GM12878 (cell line): ENCODE measurements at regions of chr20 and their contacts with region 1.

Region 1: GRCh38 chr20:54980103-54980960 is 504.9 kb downstream of the DOK5 start:
- DNase-seq: no peak
- ATAC-seq: peak; percentile 75
- H3K4me3 ChIP-seq: no peak overlapping the region
- H3K27ac ChIP-seq: no peak overlapping the region
- H3K4me1 ChIP-seq: no peaks in the 10 kb centered on the region
- H3K27me3 ChIP-seq: no peaks in the 10 kb centered on the region
- CTCF ChIP-seq: peak in 2 of 3 experiments; percentile 40 to 61; a peak in 3 of 6 replicates
- EP300 ChIP-seq: no peak
- POLR2A ChIP-seq: no peak
- RAD21 ChIP-seq: no peak

Region 2: GRCh38 chr20:54643791-54644190 is 336.5 kb before region 1 on chr20:
- CTCF ChIA-PET with region 1: no interaction called
- POLR2A ChIA-PET with region 1: no interaction called
- RAD21 ChIA-PET with region 1: no interaction called
- SMC1A ChIA-PET with region 1: no interaction called
- in situ Hi-C with region 1: no loop called
- intact Hi-C with region 1: no loop called
- DNase-seq: no peak
- ATAC-seq: no peak
- H3K4me3 ChIP-seq: no peak overlapping the region
- H3K27ac ChIP-seq: no peak overlapping the region
- H3K4me1 ChIP-seq: no peaks in the 10 kb centered on the region
- H3K27me3 ChIP-seq: no peaks in the 10 kb centered on the region
- CTCF ChIP-seq: no peak
- EP300 ChIP-seq: no peak
- POLR2A ChIP-seq: no peak
- RAD21 ChIP-seq: no peak

Region 3: DNA sequence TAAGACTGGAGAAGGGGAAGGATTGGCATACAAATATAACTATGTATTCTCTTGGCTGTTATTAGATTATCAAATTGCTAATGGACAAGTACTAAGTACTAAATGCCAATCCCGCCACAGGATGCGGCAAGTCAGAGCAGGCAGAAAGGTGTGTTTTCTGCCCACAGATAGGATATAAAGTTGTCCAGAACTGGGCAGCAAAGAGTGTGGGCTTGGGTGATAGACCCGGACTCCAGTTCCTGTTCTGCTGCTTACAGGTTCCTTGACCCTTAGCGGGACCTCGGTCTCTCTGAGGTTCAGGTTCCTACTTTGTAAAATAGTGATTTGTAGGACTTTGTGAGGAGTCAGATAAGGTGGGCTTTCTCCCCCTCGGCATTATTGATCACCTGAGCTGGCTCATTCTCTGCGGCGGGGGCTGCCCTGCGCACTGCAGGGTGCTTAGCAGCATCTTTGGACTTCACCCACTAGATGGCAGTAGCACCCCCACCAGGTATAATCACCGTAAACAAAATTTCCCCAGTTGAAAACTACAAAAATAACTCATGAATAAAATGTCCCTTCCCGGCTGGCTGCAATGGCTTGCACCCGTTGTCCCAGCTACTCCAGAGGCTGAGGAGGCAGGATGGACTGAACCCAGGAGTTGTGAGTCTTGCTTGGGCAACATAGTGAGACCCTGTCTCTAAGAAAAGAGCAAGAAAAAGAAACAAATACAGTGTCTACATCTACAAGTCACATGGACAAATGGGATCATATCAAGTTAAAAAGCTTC is 311.9 kb before region 1 on chr20:
- CTCF ChIA-PET with region 1: interaction called, 4 read pairs
- POLR2A ChIA-PET with region 1: no interaction called
- RAD21 ChIA-PET with region 1: no interaction called
- SMC1A ChIA-PET with region 1: no interaction called
- in situ Hi-C with region 1: no loop called
- intact Hi-C with region 1: loop called (anchors 10 kb)
- DNase-seq: no peak
- ATAC-seq: peak; percentile 92
- H3K4me3 ChIP-seq: no peak overlapping the region
- H3K27ac ChIP-seq: no peak overlapping the region
- H3K4me1 ChIP-seq: no peaks in the 10 kb centered on the region
- H3K27me3 ChIP-seq: no peaks in the 10 kb centered on the region
- CTCF ChIP-seq: peak; percentile 61 to 75 (median 73)
- EP300 ChIP-seq: no peak
- POLR2A ChIP-seq: no peak
- RAD21 ChIP-seq: peak; percentile 41; the same call in 1 of the 2 replicates

Region 4: GRCh38 chr20:55004049-55004448 is 23.7 kb after region 1 on chr20:
- CTCF ChIA-PET with region 1: interaction called, 12 read pairs
- POLR2A ChIA-PET with region 1: interaction called, 4 read pairs
- RAD21 ChIA-PET with region 1: interaction called, 7 read pairs
- SMC1A ChIA-PET with region 1: interaction called, 5 read pairs
- in situ Hi-C with region 1: no loop called
- intact Hi-C with region 1: no loop called
- DNase-seq: no peak
- ATAC-seq: peak; percentile 31; the same call in 1 of the 3 replicates
- H3K4me3 ChIP-seq: no peak overlapping the region
- H3K27ac ChIP-seq: no peak overlapping the region
- H3K4me1 ChIP-seq: no peaks in the 10 kb centered on the region
- H3K27me3 ChIP-seq: no peaks in the 10 kb centered on the region
- CTCF ChIP-seq: no peak; a peak in 1 of 6 replicates
- EP300 ChIP-seq: no peak
- POLR2A ChIP-seq: no peak
- RAD21 ChIP-seq: no peak

Region 5: GRCh38 chr20:55116598-55116997 is 136.3 kb after region 1 on chr20:
- CTCF ChIA-PET with region 1: interaction called, 7 read pairs
- POLR2A ChIA-PET with region 1: no interaction called
- RAD21 ChIA-PET with region 1: interaction called, 10 read pairs
- SMC1A ChIA-PET with region 1: interaction called, 4 read pairs
- in situ Hi-C with region 1: no loop called
- intact Hi-C with region 1: loop called (anchors 2 kb)
- DNase-seq: peak; percentile 25
- ATAC-seq: peak; percentile 74
- H3K4me3 ChIP-seq: no peak overlapping the region
- H3K27ac ChIP-seq: no peak overlapping the region
- H3K4me1 ChIP-seq: no peaks in the 10 kb centered on the region
- H3K27me3 ChIP-seq: no peaks in the 10 kb centered on the region
- CTCF ChIP-seq: no peak
- EP300 ChIP-seq: no peak
- POLR2A ChIP-seq: no peak
- RAD21 ChIP-seq: no peak

Region 6: GRCh38 chr20:55269913-55270312 is 289.6 kb after region 1 on chr20:
- CTCF ChIA-PET with region 1: no interaction called
- POLR2A ChIA-PET with region 1: no interaction called
- RAD21 ChIA-PET with region 1: no interaction called
- SMC1A ChIA-PET with region 1: interaction called, 6 read pairs
- in situ Hi-C with region 1: no loop called
- intact Hi-C with region 1: loop called (anchors 5 kb)
- DNase-seq: no peak
- ATAC-seq: no peak
- H3K4me3 ChIP-seq: no peak overlapping the region
- H3K27ac ChIP-seq: no peak overlapping the region
- H3K4me1 ChIP-seq: no peaks in the 10 kb centered on the region
- H3K27me3 ChIP-seq: no peaks in the 10 kb centered on the region
- CTCF ChIP-seq: no peak
- EP300 ChIP-seq: no peak
- POLR2A ChIP-seq: no peak
- RAD21 ChIP-seq: no peak